ENCODE measurements at regions of chr2 and their contacts with region 1.

Region 1: GRCh38 chr2:186485871-186486650 is at the start of gene ZC3H15:
- DNase-seq: peak; percentile 98
- ATAC-seq: peak; percentile 92
- H3K4me3 ChIP-seq: peak within 1 kb of the TSS; percentile 67 to 91 (median 90)
- H3K27ac ChIP-seq: peak within 1 kb of the TSS; percentile 88
- H3K4me1 ChIP-seq: peaks cover 51% of the 10 kb centered on the region
- H3K27me3 ChIP-seq: no peaks in the 10 kb centered on the region; a peak in 1 of 5 replicates
- CTCF ChIP-seq: no peak; the same call in 1 of the 2 replicates
- EP300 ChIP-seq: 0 out of 4 replicates have a peak, but pooled peaks have one; percentile 8 to 48
- POLR2A ChIP-seq: peak; percentile 94 to 98
- RAD21 ChIP-seq: peak; percentile 60
- total RNA-seq, gene ZC3H15: 168 and 286 TPM in 2 replicates

Region 2: DNA sequence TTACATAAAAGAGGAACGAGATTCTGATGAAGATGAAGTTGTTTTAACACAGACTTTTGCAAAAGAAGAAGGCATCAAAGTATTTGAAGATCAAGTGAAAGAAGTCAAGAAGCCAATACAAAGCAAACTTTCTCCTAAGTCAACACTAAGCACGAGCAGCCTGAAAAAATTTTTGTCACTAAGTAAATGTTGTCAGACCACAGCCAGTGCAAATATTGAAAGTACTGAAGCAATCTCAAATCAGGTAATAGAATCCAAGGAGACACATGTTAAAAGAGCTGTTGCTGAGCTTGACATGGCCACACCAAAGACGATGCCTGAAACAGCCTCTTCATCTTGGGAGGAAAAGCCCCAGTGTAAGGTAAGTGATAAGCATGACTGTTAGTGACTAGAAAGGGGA is 672.4 kb before region 1 on chr2:
- CTCF ChIA-PET with region 1: no interaction called
- POLR2A ChIA-PET with region 1: no interaction called
- in situ Hi-C with region 1: no loop called
- intact Hi-C with region 1: loop called (anchors 10 kb)
- DNase-seq: peak; percentile 86
- ATAC-seq: peak; percentile 98
- H3K4me3 ChIP-seq: no peak overlapping the region
- H3K27ac ChIP-seq: no peak overlapping the region
- H3K4me1 ChIP-seq: peaks cover 29% of the 10 kb centered on the region
- H3K27me3 ChIP-seq: no peaks in the 10 kb centered on the region
- CTCF ChIP-seq: no peak
- EP300 ChIP-seq: peak; percentile 69 to 94
- POLR2A ChIP-seq: no peak
- RAD21 ChIP-seq: no peak

Region 3: DNA sequence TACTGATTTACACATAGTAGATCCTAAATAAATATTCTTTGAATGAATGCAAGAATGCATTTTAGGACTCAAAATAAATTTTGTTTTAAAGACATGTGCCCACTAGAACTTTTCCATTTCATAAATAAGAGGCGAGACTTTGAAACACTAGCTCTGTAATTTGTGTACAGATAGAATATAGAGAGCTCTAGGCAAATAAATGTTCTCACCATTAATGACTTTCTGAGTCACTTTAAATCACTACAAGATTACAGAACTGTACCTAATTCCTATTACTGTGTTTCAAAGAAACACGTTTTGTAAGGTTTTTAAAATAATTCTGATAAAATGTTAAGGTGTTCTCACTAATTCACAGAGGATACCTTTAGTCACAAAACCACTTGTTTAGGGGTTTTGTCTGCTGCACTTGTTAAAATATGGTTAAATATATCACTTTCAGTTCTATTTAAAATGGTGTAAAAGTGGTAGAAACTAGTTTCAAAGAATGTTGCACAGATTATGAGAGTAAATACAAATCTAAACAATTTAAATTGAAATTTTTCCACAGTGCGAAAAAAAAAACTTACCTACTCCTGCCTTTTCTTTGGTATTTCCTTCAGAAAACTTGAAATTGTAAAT is 158.7 kb before region 1 on chr2:
- CTCF ChIA-PET with region 1: no interaction called
- POLR2A ChIA-PET with region 1: no interaction called
- in situ Hi-C with region 1: no loop called
- intact Hi-C with region 1: no loop called
- DNase-seq: no peak
- ATAC-seq: no peak
- H3K4me3 ChIP-seq: no peak overlapping the region
- H3K27ac ChIP-seq: no peak overlapping the region
- H3K4me1 ChIP-seq: no peaks in the 10 kb centered on the region
- H3K27me3 ChIP-seq: no peaks in the 10 kb centered on the region
- CTCF ChIP-seq: no peak
- EP300 ChIP-seq: no peak
- POLR2A ChIP-seq: no peak
- RAD21 ChIP-seq: no peak

Region 4: DNA sequence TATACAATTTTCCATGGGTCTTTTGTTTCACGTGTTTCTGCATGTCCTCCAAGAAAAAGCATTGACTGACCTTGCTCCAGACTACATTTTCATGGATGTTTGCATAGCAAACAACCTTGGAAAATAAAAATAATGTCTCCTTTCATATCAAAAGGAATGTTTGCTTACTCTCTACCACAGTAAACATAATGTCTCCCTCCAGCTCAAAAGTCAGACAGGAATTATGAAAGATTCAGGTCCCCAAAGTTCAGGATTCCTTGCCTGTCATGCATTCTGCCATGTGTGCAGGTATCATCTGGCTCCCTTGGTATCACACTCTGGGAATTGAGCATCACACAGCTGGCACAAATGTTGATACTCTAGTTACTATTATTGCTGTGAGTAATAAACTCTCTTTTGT is 103.1 kb before region 1 on chr2:
- CTCF ChIA-PET with region 1: no interaction called
- POLR2A ChIA-PET with region 1: interaction called, 6 read pairs
- in situ Hi-C with region 1: no loop called
- intact Hi-C with region 1: loop called (anchors 5 kb)
- DNase-seq: peak; percentile 98
- ATAC-seq: peak; percentile 99
- H3K4me3 ChIP-seq: peak overlapping the region in 2 of 3 experiments; percentile 3 to 7; a peak in 1 of 6 replicates
- H3K27ac ChIP-seq: peak overlapping the region; percentile 76
- H3K4me1 ChIP-seq: peaks cover 62% of the 10 kb centered on the region
- H3K27me3 ChIP-seq: no peaks in the 10 kb centered on the region
- CTCF ChIP-seq: no peak
- EP300 ChIP-seq: peak; percentile 76 to 98
- POLR2A ChIP-seq: no peak
- RAD21 ChIP-seq: no peak

Region 5: GRCh38 chr2:186426153-186427016 is 59.7 kb before region 1 on chr2:
- CTCF ChIA-PET with region 1: no interaction called
- POLR2A ChIA-PET with region 1: no interaction called
- in situ Hi-C with region 1: no loop called
- intact Hi-C with region 1: no loop called
- DNase-seq: peak; percentile 46
- ATAC-seq: peak; percentile 59; the same call in 2 of the 3 replicates
- H3K4me3 ChIP-seq: no peak overlapping the region
- H3K27ac ChIP-seq: no peak overlapping the region
- H3K4me1 ChIP-seq: peaks cover 22% of the 10 kb centered on the region
- H3K27me3 ChIP-seq: no peaks in the 10 kb centered on the region
- CTCF ChIP-seq: no peak
- EP300 ChIP-seq: peak in 1 of 2 experiments; percentile 39; a peak in 1 of 4 replicates
- POLR2A ChIP-seq: no peak
- RAD21 ChIP-seq: no peak

Region 6: GRCh38 chr2:186518945-186519344 is 32.9 kb after region 1 on chr2:
- CTCF ChIA-PET with region 1: no interaction called
- POLR2A ChIA-PET with region 1: no interaction called
- in situ Hi-C with region 1: no loop called
- intact Hi-C with region 1: no loop called
- DNase-seq: no peak
- ATAC-seq: no peak
- H3K4me3 ChIP-seq: no peak overlapping the region
- H3K27ac ChIP-seq: no peak overlapping the region
- H3K4me1 ChIP-seq: no peaks in the 10 kb centered on the region
- H3K27me3 ChIP-seq: no peaks in the 10 kb centered on the region
- CTCF ChIP-seq: no peak
- EP300 ChIP-seq: no peak
- POLR2A ChIP-seq: no peak
- RAD21 ChIP-seq: no peak

Region 7: DNA sequence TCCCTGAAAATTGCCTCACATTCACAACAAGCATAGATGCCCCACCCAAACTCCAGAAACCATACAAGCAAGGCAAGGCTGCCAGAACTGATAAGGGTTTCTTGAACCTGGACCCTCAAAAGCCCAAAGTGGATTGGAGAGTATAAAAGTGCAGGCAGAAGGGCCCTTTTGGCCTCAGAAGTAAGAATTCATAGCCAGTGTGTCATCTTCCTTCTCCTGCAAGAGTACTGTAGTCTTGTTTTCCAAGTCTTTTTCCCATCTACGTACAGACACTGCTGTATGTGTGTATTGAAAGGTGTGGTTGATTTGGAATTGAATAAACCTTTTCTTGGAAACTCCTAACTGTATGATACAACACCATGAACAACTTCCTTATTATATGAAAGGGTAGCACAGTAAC is 46.8 kb after region 1 on chr2:
- CTCF ChIA-PET with region 1: no interaction called
- POLR2A ChIA-PET with region 1: interaction called, 15 read pairs
- in situ Hi-C with region 1: no loop called
- intact Hi-C with region 1: no loop called
- DNase-seq: no peak
- ATAC-seq: no peak
- H3K4me3 ChIP-seq: no peak overlapping the region
- H3K27ac ChIP-seq: peak overlapping the region; percentile 47
- H3K4me1 ChIP-seq: peaks cover 52% of the 10 kb centered on the region
- H3K27me3 ChIP-seq: no peaks in the 10 kb centered on the region
- CTCF ChIP-seq: no peak
- EP300 ChIP-seq: no peak
- POLR2A ChIP-seq: no peak
- RAD21 ChIP-seq: no peak

Region 8: DNA sequence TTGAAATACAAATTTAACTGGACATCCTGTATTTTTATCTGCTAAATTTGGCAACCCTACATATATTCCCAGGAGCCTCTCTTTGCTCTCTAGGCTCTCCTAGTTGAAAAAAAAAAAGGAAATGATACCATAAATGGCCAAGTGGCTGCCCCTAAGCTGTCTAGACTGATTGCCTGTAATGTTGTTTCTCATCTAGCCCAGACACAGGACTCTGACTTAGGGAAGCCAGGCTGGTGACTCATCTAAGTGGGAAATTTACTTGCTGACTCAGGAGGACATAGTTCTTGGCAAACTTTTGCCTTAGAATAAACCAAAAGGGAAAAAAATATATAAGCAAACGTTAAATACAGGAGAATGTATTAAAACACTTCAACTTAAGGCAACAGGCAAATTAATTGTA is 89.2 kb after region 1 on chr2:
- CTCF ChIA-PET with region 1: no interaction called
- POLR2A ChIA-PET with region 1: interaction called, 10 read pairs
- in situ Hi-C with region 1: no loop called
- intact Hi-C with region 1: no loop called
- DNase-seq: peak; percentile 94
- ATAC-seq: peak; percentile 97
- H3K4me3 ChIP-seq: no peak overlapping the region
- H3K27ac ChIP-seq: no peak overlapping the region
- H3K4me1 ChIP-seq: peaks cover 26% of the 10 kb centered on the region
- H3K27me3 ChIP-seq: no peaks in the 10 kb centered on the region
- CTCF ChIP-seq: no peak
- EP300 ChIP-seq: peak in 1 of 2 experiments; percentile 54; a peak in 1 of 4 replicates
- POLR2A ChIP-seq: no peak
- RAD21 ChIP-seq: no peak

Region 9: DNA sequence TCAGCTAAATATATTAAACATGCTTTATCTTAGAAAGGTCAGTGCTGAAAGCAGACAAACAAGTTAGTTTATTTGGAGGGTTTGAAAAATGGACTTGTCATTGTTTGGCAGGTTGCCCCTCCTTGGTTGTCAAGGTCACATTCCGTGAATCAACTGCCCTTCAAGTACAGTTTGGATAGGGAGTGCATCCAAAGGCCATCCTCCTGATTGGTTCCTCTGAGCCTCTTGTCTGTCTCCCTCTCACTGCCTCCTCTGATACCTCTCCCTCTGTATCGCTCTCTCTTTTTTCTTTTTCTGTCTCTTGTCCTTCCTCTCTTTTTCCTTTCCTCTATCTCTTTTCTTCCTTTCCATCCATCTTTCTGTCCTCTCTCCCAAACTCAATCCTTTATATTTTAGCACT is 109.2 kb after region 1 on chr2:
- CTCF ChIA-PET with region 1: no interaction called
- POLR2A ChIA-PET with region 1: interaction called, 48 read pairs
- in situ Hi-C with region 1: no loop called
- intact Hi-C with region 1: loop called (anchors 2 kb)
- DNase-seq: peak; percentile 97
- ATAC-seq: peak; percentile 80
- H3K4me3 ChIP-seq: no peak overlapping the region; a peak in 1 of 6 replicates
- H3K27ac ChIP-seq: no peak overlapping the region
- H3K4me1 ChIP-seq: peaks cover 55% of the 10 kb centered on the region
- H3K27me3 ChIP-seq: no peaks in the 10 kb centered on the region; a peak in 1 of 5 replicates
- CTCF ChIP-seq: no peak
- EP300 ChIP-seq: peak in 1 of 2 experiments; percentile 86; a peak in 2 of 4 replicates
- POLR2A ChIP-seq: no peak
- RAD21 ChIP-seq: no peak

Region 10: DNA sequence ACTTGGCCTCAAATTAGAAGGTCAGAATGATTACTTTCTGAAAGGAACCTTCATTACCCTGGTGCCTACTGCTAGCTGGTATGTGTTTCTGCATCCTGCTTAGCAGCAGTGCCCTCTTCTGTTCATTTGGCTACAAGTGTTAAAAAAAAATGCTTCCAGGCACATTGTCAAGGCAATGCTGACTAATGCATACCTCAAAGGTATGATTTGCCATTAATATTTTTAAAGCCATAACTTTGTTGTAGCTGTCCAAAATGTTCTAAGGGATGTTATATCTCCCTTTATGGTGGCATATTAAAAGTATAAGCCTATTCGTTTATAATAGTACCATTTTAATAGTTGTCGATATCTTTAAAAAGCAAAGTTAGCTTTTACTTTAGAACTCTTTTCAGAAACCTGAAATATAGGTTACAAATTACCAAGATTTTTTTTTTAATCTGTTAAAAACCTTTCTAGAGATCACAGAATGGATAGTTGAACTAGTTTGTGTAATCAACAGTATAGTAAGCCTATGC is 155.8 kb after region 1 on chr2:
- CTCF ChIA-PET with region 1: no interaction called
- POLR2A ChIA-PET with region 1: interaction called, 4 read pairs
- in situ Hi-C with region 1: no loop called
- intact Hi-C with region 1: loop called (anchors 1 kb)
- DNase-seq: peak; percentile 75
- ATAC-seq: peak; percentile 98
- H3K4me3 ChIP-seq: no peak overlapping the region
- H3K27ac ChIP-seq: no peak overlapping the region
- H3K4me1 ChIP-seq: no peaks in the 10 kb centered on the region
- H3K27me3 ChIP-seq: no peaks in the 10 kb centered on the region
- CTCF ChIP-seq: peak; percentile 88
- EP300 ChIP-seq: no peak
- POLR2A ChIP-seq: no peak
- RAD21 ChIP-seq: peak; percentile 88